IMR-90 (cell line): ENCODE measurements at regions of chr10 and their contacts with region 1.

Region 1: DNA sequence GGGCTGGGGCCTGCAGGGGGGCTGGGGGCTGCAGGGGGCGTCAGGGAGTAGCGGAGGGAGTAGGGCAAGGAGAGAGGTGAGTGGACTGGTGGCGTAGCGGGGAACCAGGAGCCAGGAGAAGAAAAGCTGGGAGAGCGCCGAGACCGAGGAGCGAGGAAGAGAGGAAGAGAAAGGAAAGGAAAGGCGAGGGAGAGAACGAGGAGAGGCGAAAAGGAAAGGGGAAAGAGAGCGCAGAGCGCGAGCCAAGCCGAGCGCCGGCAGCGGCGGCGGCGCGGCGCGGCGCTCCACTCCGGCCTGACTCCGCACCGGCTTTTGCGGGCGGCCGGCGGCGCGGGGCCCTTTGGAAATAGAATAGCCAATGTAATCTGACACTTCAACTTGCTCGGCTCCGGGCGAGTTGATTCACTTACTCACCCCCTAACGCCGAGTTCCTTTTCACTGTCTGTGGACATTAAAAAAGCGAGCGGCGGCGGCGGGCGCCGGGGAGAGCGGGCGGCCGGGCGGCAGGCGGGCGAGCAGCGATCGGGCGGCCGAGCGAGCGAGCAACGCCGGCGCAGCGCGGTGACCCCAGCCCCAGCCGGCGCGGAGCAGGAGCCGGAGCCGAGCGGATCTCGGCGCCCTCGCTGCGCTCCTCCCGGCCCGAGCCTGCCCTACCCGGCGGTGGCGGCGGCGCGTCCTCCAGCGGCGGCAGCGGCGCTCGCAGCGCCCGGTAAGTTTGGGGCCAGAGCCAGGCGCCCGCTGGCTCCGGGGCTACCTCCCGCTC is at the start of gene ZMIZ1:
- DNase-seq: peak; percentile 93
- ATAC-seq: peak; percentile 30
- H3K4me3 ChIP-seq: peak within 1 kb of the TSS; percentile 99
- H3K27ac ChIP-seq: peak within 1 kb of the TSS; percentile 99
- H3K4me1 ChIP-seq: peaks cover 22% of the 10 kb centered on the region
- H3K27me3 ChIP-seq: no peaks in the 10 kb centered on the region
- CTCF ChIP-seq: peak; percentile 39
- POLR2A ChIP-seq: peak; percentile 87
- RAD21 ChIP-seq: peak; percentile 31
- total RNA-seq, gene ZMIZ1: 6.6 and 6.7 TPM in 2 replicates

Region 2: GRCh38 chr10:78047314-78047891 is 1021.3 kb before region 1 on chr10:
- CTCF ChIA-PET with region 1: interaction called, 4 read pairs
- POLR2A ChIA-PET with region 1: no interaction called
- dilution Hi-C with region 1: no loop called
- in situ Hi-C with region 1: loop called (anchors 10 kb)
- intact Hi-C with region 1: loop called (anchors 2 kb)
- DNase-seq: peak; percentile 87
- ATAC-seq: peak; percentile 87
- H3K4me3 ChIP-seq: no peak overlapping the region
- H3K27ac ChIP-seq: no peak overlapping the region
- H3K4me1 ChIP-seq: peaks cover 15% of the 10 kb centered on the region
- H3K27me3 ChIP-seq: no peaks in the 10 kb centered on the region
- CTCF ChIP-seq: peak; percentile 96
- POLR2A ChIP-seq: no peak
- RAD21 ChIP-seq: peak; percentile 98

Region 3: DNA sequence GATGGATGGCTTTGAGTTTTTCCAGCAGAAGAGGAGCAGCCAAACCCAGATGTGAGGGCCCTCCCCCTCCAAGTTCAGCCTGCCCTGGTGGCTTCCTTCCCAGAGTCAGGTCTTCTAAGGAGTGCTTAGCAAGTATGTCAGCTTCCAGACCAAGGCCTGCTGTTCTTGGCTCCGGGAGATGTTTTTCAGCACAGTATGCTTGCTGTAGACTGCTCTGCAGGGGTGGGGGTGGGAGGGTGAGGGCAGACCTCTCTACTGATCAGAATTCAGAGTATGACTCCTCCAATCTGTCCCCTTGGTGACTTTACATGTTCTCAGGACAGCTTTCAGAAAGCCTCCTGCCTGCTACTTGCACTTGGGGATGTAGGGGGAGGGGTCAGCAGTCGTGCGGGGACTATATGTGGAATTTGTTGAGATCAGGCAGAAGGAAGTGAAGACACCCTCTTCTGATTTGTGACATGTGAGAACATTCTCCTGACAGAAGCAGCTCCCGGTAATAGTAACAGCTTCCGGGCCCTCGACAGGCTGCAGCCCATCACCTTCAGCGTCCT is 516.4 kb before region 1 on chr10:
- CTCF ChIA-PET with region 1: no interaction called
- POLR2A ChIA-PET with region 1: no interaction called
- dilution Hi-C with region 1: no loop called
- in situ Hi-C with region 1: no loop called
- intact Hi-C with region 1: loop called (anchors 10 kb)
- DNase-seq: peak; percentile 60
- ATAC-seq: peak; percentile 91
- H3K4me3 ChIP-seq: no peak overlapping the region
- H3K27ac ChIP-seq: peak overlapping the region; percentile 16; the same call in 1 of the 2 replicates
- H3K4me1 ChIP-seq: peaks cover 10% of the 10 kb centered on the region; the same call in 1 of the 2 replicates
- H3K27me3 ChIP-seq: peaks cover 5% of the 10 kb centered on the region
- CTCF ChIP-seq: no peak
- POLR2A ChIP-seq: no peak
- RAD21 ChIP-seq: no peak

Region 4: GRCh38 chr10:78805176-78805575 is 263.6 kb before region 1 on chr10:
- CTCF ChIA-PET with region 1: no interaction called
- POLR2A ChIA-PET with region 1: no interaction called
- dilution Hi-C with region 1: no loop called
- in situ Hi-C with region 1: no loop called
- intact Hi-C with region 1: loop called (anchors 5 kb)
- DNase-seq: peak; percentile 99
- ATAC-seq: peak; percentile 90
- H3K4me3 ChIP-seq: no peak overlapping the region
- H3K27ac ChIP-seq: peak overlapping the region; percentile 42; the same call in 1 of the 2 replicates
- H3K4me1 ChIP-seq: peaks cover 40% of the 10 kb centered on the region
- H3K27me3 ChIP-seq: peaks cover 11% of the 10 kb centered on the region
- CTCF ChIP-seq: no peak
- POLR2A ChIP-seq: no peak
- RAD21 ChIP-seq: peak; percentile 33; the same call in 1 of the 2 replicates

Region 5: GRCh38 chr10:78972947-78973900 is 95.5 kb before region 1 on chr10:
- CTCF ChIA-PET with region 1: interaction called, 5 read pairs
- POLR2A ChIA-PET with region 1: no interaction called
- dilution Hi-C with region 1: no loop called
- in situ Hi-C with region 1: no loop called
- intact Hi-C with region 1: loop called (anchors 1 kb)
- DNase-seq: peak; percentile 95
- ATAC-seq: peak; percentile 69
- H3K4me3 ChIP-seq: 0 out of 2 replicates have a peak overlapping the region, but pooled peaks have one; percentile 3
- H3K27ac ChIP-seq: peak overlapping the region; percentile 98
- H3K4me1 ChIP-seq: peaks cover 38% of the 10 kb centered on the region
- H3K27me3 ChIP-seq: no peaks in the 10 kb centered on the region
- CTCF ChIP-seq: no peak
- POLR2A ChIP-seq: peak; percentile 69
- RAD21 ChIP-seq: no peak; the same call in 1 of the 2 replicates

Region 6: GRCh38 chr10:79137826-79138225 is 69.1 kb after region 1 on chr10:
- CTCF ChIA-PET with region 1: no interaction called
- POLR2A ChIA-PET with region 1: interaction called, 3 read pairs
- dilution Hi-C with region 1: no loop called
- in situ Hi-C with region 1: loop called (anchors 5 kb)
- intact Hi-C with region 1: loop called (anchors 5 kb)
- DNase-seq: peak; percentile 62
- ATAC-seq: peak; percentile 27
- H3K4me3 ChIP-seq: no peak overlapping the region
- H3K27ac ChIP-seq: peak overlapping the region; percentile 90
- H3K4me1 ChIP-seq: peaks cover 68% of the 10 kb centered on the region
- H3K27me3 ChIP-seq: no peaks in the 10 kb centered on the region
- CTCF ChIP-seq: no peak
- POLR2A ChIP-seq: no peak
- RAD21 ChIP-seq: no peak